Activated T-helper 2 cell treated with anti-CD3 and anti-CD28 coated beads, Interferon-gamma antibody, Interleukin-2, Interleukin-4, amounts not matched to agents 10 μg/mL and 5 μg/mL and 100 μg/mL, durations not matched to agents 14 hours and 24 hours and 36 hours (primary cell): ENCODE measurements at regions of chr14 and their contacts with region 1.

Region 1: GRCh38 chr14:55579724-55580469 is at the start of gene KTN1:
- DNase-seq: peak; percentile 80
- H3K4me3 Mint-ChIP-seq: peak within 1 kb of the TSS; percentile 90
- H3K27ac Mint-ChIP-seq: peak within 1 kb of the TSS; percentile 86
- H3K4me1 Mint-ChIP-seq: peaks cover 33% of the 10 kb centered on the region
- H3K27me3 Mint-ChIP-seq: no peaks in the 10 kb centered on the region
- total RNA-seq, gene KTN1: 135 and 137 TPM in 2 replicates

Region 2: DNA sequence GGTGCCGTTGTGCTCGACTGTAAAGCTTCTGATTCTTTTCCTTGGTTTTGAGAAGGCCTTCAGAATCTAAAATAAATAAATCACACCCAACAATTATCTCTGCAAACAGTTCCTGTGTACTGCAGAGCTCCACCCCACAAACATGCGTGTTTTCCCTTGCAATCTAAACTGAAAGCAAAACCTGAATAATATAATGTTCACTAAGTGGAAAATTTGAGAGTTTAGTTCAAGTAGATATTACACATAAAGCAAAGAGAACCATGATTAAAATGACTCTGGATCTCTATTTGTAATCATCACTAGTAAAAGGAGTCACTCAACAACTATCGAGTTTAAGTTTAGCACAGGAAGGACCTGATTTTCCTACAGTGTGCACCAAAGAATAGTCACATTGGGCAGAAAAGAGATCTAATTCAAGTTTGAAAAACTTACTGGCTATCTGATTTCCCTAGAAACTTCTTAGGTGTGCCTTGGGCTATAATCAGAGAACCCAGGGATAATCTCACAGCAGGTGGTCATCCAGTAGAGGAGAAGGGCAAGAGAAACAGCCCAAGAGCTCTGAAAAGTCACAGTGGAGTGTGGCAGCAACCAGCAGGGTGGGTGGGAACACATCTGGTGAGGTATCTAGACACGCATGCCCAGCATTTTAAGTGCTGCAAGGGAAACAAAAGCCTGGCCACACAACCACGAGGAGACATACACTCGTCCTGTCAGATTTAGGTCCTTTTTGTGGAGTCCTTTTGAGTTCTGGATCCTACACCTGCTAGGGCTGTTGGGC is 193.7 kb before region 1 on chr14:
- intact Hi-C with region 1: loop called (anchors 2 kb)
- DNase-seq: no peak
- H3K4me3 Mint-ChIP-seq: peak overlapping the region; percentile 11
- H3K27ac Mint-ChIP-seq: peak overlapping the region; percentile 88
- H3K4me1 Mint-ChIP-seq: peaks cover 44% of the 10 kb centered on the region
- H3K27me3 Mint-ChIP-seq: no peaks in the 10 kb centered on the region

Region 3: DNA sequence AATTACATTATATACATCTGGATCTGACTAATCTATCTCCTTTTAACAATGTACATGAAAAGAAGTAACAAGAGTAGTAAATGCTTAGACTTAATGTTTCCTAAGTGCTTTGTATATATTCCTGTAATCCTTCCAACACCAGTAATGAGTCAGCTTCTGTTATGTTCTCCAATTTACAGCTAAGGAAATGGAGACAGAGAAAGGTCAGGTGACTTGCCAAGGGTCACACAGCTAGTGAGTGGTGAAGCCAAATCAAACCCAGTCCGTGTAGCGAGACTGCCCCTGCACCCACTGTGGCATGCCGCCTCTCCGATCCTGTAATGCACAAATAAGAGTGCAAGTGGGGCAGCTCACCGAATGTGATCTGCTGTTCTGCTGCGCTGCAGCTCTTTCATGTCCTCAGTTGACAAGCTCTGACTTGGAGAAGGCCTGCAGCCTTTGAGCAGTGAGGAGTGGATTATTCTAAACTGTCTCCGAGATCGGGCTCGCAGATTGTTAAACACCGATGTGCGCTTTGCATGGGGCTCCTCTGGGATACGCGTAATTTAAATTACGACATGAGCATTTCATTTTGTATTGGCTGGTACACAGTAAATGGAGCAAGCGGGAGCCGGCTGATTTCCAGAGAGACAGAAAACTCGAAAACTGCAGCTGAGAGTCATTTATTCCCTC is 64.9 kb before region 1 on chr14:
- intact Hi-C with region 1: no loop called
- DNase-seq: no peak
- H3K4me3 Mint-ChIP-seq: no peak overlapping the region
- H3K27ac Mint-ChIP-seq: no peak overlapping the region
- H3K4me1 Mint-ChIP-seq: no peaks in the 10 kb centered on the region
- H3K27me3 Mint-ChIP-seq: no peaks in the 10 kb centered on the region

Region 4: GRCh38 chr14:55641954-55642353 is 62.1 kb after region 1 on chr14:
- intact Hi-C with region 1: loop called (anchors 5 kb)
- DNase-seq: no peak
- H3K4me3 Mint-ChIP-seq: no peak overlapping the region
- H3K27ac Mint-ChIP-seq: no peak overlapping the region
- H3K4me1 Mint-ChIP-seq: peaks cover 7% of the 10 kb centered on the region
- H3K27me3 Mint-ChIP-seq: no peaks in the 10 kb centered on the region